ENCODE measurements at regions of chr15 and their contacts with region 1.

Region 1: DNA sequence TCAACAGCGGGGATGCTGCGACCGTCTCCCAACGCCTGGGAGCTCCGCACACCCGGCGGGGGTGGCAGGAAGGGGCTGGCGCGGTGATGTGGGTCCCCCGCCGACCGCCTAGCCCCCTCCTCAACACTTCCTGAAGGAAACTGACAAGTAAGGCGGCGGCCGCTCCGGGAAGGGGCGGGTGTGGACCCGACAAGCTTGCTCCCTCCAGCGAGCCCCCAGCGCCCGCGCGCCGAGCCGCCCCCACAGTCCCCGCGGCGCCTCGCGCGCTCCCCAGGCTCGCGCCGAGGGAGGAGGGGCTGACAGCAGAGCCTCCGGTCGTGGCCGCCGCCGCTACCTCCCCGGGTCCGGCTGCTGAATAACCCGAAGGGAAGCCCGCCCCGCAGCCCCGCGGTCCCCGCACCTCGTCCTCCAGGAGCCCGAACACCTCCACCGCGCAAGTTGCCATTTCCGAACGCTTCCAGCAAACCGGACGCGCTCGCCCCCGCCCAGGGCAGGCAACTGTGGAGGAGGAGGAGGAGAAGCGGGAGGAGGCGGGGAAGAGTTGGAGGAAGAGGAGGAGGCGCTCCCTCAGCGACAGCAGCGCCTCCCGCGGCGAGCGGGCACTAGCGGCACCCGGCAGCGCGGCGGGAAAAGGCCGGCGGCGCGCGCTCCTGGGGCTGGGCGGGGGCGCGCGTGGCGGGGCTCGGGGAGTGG is at the start of gene NEDD4:
- DNase-seq: peak; percentile 91 to 95 (median 95)
- ATAC-seq: peak; percentile 98
- H3K4me3 ChIP-seq: peak within 1 kb of the TSS; percentile 82
- H3K27ac ChIP-seq: peak within 1 kb of the TSS; percentile 94
- H3K4me1 ChIP-seq: peaks cover 2% of the 10 kb centered on the region
- H3K27me3 ChIP-seq: no peaks in the 10 kb centered on the region
- total RNA-seq, gene NEDD4: 8.4 to 11.6 (median 9.4) TPM

Region 2: GRCh38 chr15:56245871-56246814 is 252.9 kb after region 1 on chr15:
- intact Hi-C with region 1: loop called in 1 of 4 experiments (anchors 5 kb)
- DNase-seq: peak; percentile 90 to 96 (median 94)
- ATAC-seq: peak; percentile 84
- H3K4me3 ChIP-seq: peak overlapping the region; percentile 66
- H3K27ac ChIP-seq: peak overlapping the region; percentile 69
- H3K4me1 ChIP-seq: no peaks in the 10 kb centered on the region
- H3K27me3 ChIP-seq: no peaks in the 10 kb centered on the region